ENCODE measurements at regions of chr14 and their contacts with region 1.

Region 1: GRCh38 chr14:35046048-35046741 is at the start of gene FAM177A1:
- DNase-seq: peak; percentile 93
- ATAC-seq: peak; percentile 94
- H3K4me3 Mint-ChIP-seq: peak within 1 kb of the TSS; percentile 96
- H3K27ac Mint-ChIP-seq: peak within 1 kb of the TSS; percentile 97
- H3K4me1 Mint-ChIP-seq: peaks cover 28% of the 10 kb centered on the region
- H3K27me3 Mint-ChIP-seq: no peaks in the 10 kb centered on the region
- CTCF ChIP-seq: no peak
- total RNA-seq, gene FAM177A1: 23.5 and 27.4 TPM in 2 replicates

Region 2: GRCh38 chr14:33490555-33490954 is 1555.6 kb before region 1 on chr14:
- CTCF ChIA-PET with region 1: no interaction called
- POLR2A ChIA-PET with region 1: no interaction called
- intact Hi-C with region 1: no loop called
- DNase-seq: no peak
- ATAC-seq: no peak
- H3K4me3 Mint-ChIP-seq: no peak overlapping the region
- H3K27ac Mint-ChIP-seq: no peak overlapping the region
- H3K4me1 Mint-ChIP-seq: no peaks in the 10 kb centered on the region
- H3K27me3 Mint-ChIP-seq: no peaks in the 10 kb centered on the region
- CTCF ChIP-seq: no peak

Region 3: GRCh38 chr14:34629657-34630529 is 416.3 kb before region 1 on chr14 and contains the start of gene SNX6:
- CTCF ChIA-PET with region 1: no interaction called
- POLR2A ChIA-PET with region 1: interaction called, 7 read pairs
- intact Hi-C with region 1: loop called (anchors 1 kb)
- DNase-seq: peak; percentile 77
- ATAC-seq: peak; percentile 98
- H3K4me3 Mint-ChIP-seq: peak within 1 kb of the TSS; percentile 97
- H3K27ac Mint-ChIP-seq: peak within 1 kb of the TSS; percentile 93
- H3K4me1 Mint-ChIP-seq: peaks cover 10% of the 10 kb centered on the region
- H3K27me3 Mint-ChIP-seq: peaks cover 3% of the 10 kb centered on the region
- CTCF ChIP-seq: no peak
- total RNA-seq, gene SNX6: 56.0 and 61.0 TPM in 2 replicates

Region 4: DNA sequence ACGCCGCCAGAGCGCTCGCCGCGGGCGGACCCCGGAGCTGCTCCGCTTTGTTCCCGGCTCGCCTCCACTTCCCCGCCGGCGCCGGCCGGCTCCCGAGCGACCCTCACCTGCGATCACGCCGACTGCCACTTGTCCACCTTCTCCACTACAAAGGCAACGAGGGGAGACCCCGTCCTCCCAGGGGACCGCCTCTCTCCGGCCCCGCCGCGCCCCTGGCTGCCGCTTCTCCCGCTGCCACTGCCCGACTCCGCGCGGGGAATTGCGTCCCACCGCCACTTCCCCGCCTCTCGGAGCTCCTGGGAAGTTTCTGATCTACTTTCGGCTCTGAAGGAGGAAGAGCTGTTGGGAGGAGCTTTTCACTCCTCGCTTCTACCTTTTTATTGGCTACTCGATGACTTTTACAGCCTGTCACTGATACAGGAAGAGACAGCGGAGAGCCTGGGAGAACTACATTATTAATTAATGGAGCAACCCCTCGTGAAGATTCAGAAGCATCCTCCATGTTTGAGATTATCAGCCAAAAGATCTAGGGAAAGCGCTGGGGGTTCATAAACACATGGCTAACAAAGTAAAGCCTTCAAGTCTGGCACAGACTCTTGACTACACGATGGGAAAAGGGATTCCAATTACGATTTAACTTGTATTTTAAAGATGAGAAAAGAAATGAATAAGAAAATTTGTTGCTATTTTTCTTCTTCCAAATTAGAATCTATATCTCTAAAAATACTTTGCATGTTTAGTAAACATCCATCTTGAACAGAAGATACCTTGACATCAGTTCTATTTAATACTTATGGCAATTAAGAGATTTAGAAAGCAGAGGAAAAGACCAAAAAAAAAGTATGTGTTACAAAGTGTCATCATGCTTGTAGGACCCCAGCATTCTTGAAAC is 170.9 kb before region 1 on chr14 and contains the start of gene BAZ1A:
- CTCF ChIA-PET with region 1: no interaction called
- POLR2A ChIA-PET with region 1: interaction called, 31 read pairs
- intact Hi-C with region 1: loop called (anchors 1 kb)
- DNase-seq: peak; percentile 63
- ATAC-seq: peak; percentile 12
- H3K4me3 Mint-ChIP-seq: peak within 1 kb of the TSS; percentile 100
- H3K27ac Mint-ChIP-seq: peak within 1 kb of the TSS; percentile 99
- H3K4me1 Mint-ChIP-seq: peaks cover 35% of the 10 kb centered on the region
- H3K27me3 Mint-ChIP-seq: no peaks in the 10 kb centered on the region
- CTCF ChIP-seq: no peak
- total RNA-seq, gene BAZ1A: 45.3 and 55.9 TPM in 2 replicates

Region 5: DNA sequence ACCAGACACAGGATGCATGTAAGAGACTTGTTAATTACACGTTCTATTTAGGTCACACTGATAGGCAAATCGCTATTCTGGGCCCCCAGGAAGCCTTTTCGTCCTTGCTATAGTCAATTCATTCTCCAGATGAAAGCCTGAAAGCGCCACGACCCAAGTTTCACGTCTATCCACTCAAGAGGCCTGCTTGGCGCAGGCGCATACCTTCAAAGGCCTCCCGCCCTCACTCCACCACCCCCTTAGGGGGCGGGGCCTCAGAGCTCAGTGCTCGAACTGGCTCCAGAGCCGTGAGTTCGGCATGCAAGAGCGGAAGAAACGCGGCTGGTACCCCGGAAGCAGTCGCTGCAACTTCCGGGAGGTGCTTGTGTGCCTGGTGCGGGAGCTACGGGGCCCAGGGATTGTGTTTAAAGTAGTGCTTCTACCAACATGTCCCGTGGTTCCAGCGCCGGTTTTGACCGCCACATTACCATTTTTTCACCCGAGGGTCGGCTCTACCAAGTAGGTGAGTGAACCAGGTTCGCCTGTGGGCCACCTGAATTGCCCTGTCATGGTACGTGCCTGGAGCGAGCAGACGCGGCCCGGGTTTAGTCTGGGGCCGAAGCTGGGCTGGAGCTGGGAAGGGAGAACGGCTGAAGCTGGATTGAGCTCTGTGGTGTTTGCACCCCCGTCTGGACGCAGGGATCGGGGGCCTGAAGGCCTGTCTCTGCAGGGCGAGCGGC is 246.0 kb after region 1 on chr14 and contains the start of gene PSMA6:
- CTCF ChIA-PET with region 1: no interaction called
- POLR2A ChIA-PET with region 1: interaction called, 3 read pairs
- intact Hi-C with region 1: loop called (anchors 2 kb)
- DNase-seq: peak; percentile 93
- ATAC-seq: peak; percentile 97
- H3K4me3 Mint-ChIP-seq: peak within 1 kb of the TSS; percentile 99
- H3K27ac Mint-ChIP-seq: peak within 1 kb of the TSS; percentile 96
- H3K4me1 Mint-ChIP-seq: peaks cover 61% of the 10 kb centered on the region
- H3K27me3 Mint-ChIP-seq: no peaks in the 10 kb centered on the region
- CTCF ChIP-seq: no peak
- total RNA-seq, gene PSMA6: 163 and 180 TPM in 2 replicates

Region 6: DNA sequence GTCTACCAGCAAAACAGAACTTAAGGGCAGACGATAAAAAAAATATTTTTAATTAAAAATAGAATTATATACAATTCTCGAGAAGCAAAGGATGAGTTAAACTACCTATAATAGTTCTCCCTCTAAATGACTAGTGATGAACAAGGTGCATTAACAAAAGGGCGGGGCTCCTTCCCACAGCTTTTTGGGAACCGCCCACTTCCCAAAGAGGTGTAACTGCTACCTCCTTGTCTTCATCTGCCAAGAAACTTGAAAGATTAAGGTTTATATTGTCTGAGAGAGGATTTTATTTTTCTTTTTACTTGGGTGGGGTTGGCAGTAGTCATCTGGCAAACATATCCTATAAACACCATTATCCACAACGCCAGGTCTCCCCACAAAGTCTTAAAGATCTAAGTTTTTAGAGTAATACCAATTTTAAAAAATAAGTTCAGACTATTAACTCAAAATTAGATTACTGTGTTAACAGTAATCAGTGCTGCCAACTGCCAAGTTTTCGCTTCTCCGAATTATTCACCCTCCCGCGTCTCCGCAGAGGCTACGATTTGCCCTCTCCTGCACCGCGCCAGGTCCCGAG is 762.0 kb after region 1 on chr14:
- CTCF ChIA-PET with region 1: no interaction called
- POLR2A ChIA-PET with region 1: no interaction called
- intact Hi-C with region 1: loop called (anchors 1 kb)
- DNase-seq: no peak
- ATAC-seq: no peak
- H3K4me3 Mint-ChIP-seq: peak overlapping the region; percentile 95
- H3K27ac Mint-ChIP-seq: peak overlapping the region; percentile 87
- H3K4me1 Mint-ChIP-seq: peaks cover 31% of the 10 kb centered on the region
- H3K27me3 Mint-ChIP-seq: no peaks in the 10 kb centered on the region
- CTCF ChIP-seq: no peak

Region 7: DNA sequence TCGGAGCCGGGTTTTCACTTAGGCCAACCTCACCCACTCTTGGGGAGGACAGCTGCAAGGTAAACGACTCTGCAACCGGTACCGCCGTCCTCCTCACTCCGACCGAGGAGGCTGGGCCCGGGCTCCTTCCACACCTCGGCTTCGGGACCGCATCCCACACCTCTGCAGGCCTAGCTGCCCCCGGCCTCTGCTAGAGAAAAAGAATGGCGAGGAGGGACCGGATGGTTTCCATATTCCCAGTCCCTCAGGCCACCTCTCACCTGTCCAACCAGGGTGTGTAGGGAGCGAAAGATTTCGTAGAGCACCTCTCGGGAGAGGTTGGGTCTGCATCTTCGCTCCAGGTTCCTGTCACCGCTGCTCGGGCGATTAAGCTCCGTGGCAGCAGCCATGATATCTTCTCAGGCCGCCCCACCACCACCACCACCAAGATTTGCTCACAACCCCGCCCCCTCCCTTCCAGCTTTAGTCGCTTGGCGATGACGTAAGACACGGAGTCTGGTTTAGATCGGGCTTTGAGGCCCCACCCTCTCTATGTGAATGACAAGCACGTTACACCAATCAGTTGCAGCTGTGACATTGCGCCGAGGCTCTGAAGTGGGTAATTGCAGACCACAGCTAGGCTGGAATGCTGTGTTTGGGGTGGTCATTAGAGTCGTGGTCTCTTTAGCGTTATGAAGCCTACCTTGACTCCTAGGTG is 1274.2 kb after region 1 on chr14 and contains the start of gene MBIP:
- CTCF ChIA-PET with region 1: no interaction called
- POLR2A ChIA-PET with region 1: no interaction called
- intact Hi-C with region 1: loop called (anchors 1 kb)
- DNase-seq: peak; percentile 55
- ATAC-seq: peak; percentile 99
- H3K4me3 Mint-ChIP-seq: peak within 1 kb of the TSS; percentile 97
- H3K27ac Mint-ChIP-seq: peak within 1 kb of the TSS; percentile 89
- H3K4me1 Mint-ChIP-seq: peaks cover 23% of the 10 kb centered on the region
- H3K27me3 Mint-ChIP-seq: peaks cover 15% of the 10 kb centered on the region
- CTCF ChIP-seq: no peak
- total RNA-seq, gene MBIP: 17.0 and 21.7 TPM in 2 replicates

Region 8: GRCh38 chr14:36767603-36768281 is 1721.5 kb after region 1 on chr14:
- CTCF ChIA-PET with region 1: no interaction called
- POLR2A ChIA-PET with region 1: no interaction called
- intact Hi-C with region 1: no loop called
- DNase-seq: no peak
- ATAC-seq: no peak
- H3K4me3 Mint-ChIP-seq: no peak overlapping the region
- H3K27ac Mint-ChIP-seq: no peak overlapping the region
- H3K4me1 Mint-ChIP-seq: no peaks in the 10 kb centered on the region
- H3K27me3 Mint-ChIP-seq: no peaks in the 10 kb centered on the region
- CTCF ChIP-seq: no peak